Kidney (tissue), 22 donors: ENCODE measurements at regions of chr10 and their contacts with region 1.

Region 1: DNA sequence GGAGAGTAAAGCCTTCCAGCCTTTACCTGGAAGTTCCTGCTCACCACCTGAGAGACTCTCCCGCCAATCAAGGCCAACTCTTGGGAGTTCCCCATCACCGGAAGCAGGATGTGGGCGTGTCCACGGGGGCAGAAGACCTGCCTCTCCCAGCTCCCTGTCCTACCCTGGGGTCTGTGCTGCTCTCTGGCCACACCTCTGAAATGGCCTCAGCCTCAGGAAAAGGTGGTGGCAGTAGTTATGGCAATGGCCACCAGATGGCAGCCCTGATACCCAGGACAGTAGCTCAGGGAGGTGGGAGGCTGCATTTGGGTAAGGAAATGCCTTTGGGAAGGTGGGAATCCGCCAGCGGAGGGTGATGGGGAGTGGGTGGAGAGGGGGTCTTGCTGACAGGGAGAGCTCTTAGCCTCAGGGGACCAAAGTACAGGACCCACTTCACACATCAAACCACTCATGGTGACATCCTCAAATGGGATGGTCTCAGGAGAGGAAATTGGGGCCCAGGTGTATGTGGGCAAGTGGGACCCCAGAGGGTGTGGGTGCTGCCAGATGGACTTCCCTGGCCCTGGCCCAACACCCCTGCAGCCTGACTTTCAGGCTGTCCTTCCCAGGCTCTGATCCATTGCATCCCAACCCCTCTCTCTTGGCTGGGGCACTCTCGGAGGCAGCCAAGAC is 33.9 kb downstream of the KAZALD1 start:
- DNase-seq: peak; percentile 82 to 86 (median 85)
- H3K4me3 ChIP-seq: no peak overlapping the region
- H3K27ac ChIP-seq: no peak overlapping the region
- H3K4me1 ChIP-seq: no peaks in the 10 kb centered on the region
- H3K27me3 ChIP-seq: peaks cover 5% of the 10 kb centered on the region
- CTCF ChIP-seq: peak; percentile 82

Region 2: GRCh38 chr10:101141616-101142532 is 46.2 kb after region 1 on chr10:
- intact Hi-C with region 1: loop called (anchors 5 kb)
- DNase-seq: peak; percentile 88 to 94 (median 91)
- H3K4me3 ChIP-seq: no peak overlapping the region
- H3K27ac ChIP-seq: no peak overlapping the region
- H3K4me1 ChIP-seq: peaks cover 0 to 2% (median 0%) of the 10 kb centered on the region in 3 donors
- H3K27me3 ChIP-seq: peaks cover 77% of the 10 kb centered on the region
- CTCF ChIP-seq: peak; percentile 88